Uterus (tissue), 4 donors: ENCODE measurements at regions of chr10 and their contacts with region 1.

Region 1: DNA sequence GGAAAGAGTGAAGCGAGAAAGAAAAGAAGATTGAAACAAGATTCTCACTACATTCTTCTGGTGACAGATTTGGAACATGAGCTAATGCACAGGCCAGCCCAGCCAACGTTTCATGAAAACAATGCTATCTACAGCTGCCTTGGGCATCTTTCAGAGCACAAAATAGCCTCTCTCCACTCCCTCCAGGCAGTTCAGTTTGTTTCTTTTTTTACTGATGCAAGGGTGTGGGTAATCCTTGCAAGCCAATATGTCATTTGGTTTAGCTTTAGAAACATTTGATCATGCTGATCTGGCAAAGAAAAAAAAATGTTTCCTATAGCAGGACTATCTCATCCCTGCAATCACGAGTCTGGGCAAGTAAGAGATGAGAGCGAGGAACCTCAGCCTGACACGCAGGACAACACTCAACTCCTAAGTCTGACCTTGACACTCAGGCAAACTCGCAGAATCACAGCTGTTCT is 35.9 kb downstream of the SVIL start:
- DNase-seq: peak; percentile 50 to 60
- H3K4me3 ChIP-seq: peak overlapping the region; percentile 0 to 13
- H3K27ac ChIP-seq: peak overlapping the region; percentile 78 to 92
- H3K4me1 ChIP-seq: peaks cover 0 to 7% of the 10 kb centered on the region in 2 donors
- H3K27me3 ChIP-seq: no peaks in the 10 kb centered on the region
- CTCF ChIP-seq: no peak
- POLR2A ChIP-seq: no peak

Region 2: GRCh38 chr10:29735596-29736318 is 136.9 kb after region 1 on chr10:
- intact Hi-C with region 1: loop called (anchors 10 kb)
- DNase-seq: peak; percentile 90 to 92
- H3K4me3 ChIP-seq: peak overlapping the region; percentile 74
- H3K27ac ChIP-seq: peak overlapping the region; percentile 96 to 99
- H3K4me1 ChIP-seq: no peaks in the 10 kb centered on the region
- H3K27me3 ChIP-seq: no peaks in the 10 kb centered on the region
- CTCF ChIP-seq: peak; percentile 93 to 98 (median 96)
- POLR2A ChIP-seq: peak; percentile 79 to 93